CD4-positive, alpha-beta memory T cell (primary cell): ENCODE measurements at regions of chr9 and their contacts with region 1.

Region 1: GRCh38 chr9:71472400-71472799 is 295.9 kb downstream of the CEMIP2 start:
- DNase-seq: no peak
- H3K4me3 ChIP-seq: no peak overlapping the region
- H3K4me3 Mint-ChIP-seq: no peak overlapping the region
- H3K27ac ChIP-seq: no peak overlapping the region
- H3K27ac Mint-ChIP-seq: no peak overlapping the region
- H3K4me1 ChIP-seq: no peaks in the 10 kb centered on the region
- H3K4me1 Mint-ChIP-seq: no peaks in the 10 kb centered on the region
- H3K27me3 ChIP-seq: no peaks in the 10 kb centered on the region
- H3K27me3 Mint-ChIP-seq: peaks cover 3 to 16% of the 10 kb centered on the region in 2 donors

Region 2: DNA sequence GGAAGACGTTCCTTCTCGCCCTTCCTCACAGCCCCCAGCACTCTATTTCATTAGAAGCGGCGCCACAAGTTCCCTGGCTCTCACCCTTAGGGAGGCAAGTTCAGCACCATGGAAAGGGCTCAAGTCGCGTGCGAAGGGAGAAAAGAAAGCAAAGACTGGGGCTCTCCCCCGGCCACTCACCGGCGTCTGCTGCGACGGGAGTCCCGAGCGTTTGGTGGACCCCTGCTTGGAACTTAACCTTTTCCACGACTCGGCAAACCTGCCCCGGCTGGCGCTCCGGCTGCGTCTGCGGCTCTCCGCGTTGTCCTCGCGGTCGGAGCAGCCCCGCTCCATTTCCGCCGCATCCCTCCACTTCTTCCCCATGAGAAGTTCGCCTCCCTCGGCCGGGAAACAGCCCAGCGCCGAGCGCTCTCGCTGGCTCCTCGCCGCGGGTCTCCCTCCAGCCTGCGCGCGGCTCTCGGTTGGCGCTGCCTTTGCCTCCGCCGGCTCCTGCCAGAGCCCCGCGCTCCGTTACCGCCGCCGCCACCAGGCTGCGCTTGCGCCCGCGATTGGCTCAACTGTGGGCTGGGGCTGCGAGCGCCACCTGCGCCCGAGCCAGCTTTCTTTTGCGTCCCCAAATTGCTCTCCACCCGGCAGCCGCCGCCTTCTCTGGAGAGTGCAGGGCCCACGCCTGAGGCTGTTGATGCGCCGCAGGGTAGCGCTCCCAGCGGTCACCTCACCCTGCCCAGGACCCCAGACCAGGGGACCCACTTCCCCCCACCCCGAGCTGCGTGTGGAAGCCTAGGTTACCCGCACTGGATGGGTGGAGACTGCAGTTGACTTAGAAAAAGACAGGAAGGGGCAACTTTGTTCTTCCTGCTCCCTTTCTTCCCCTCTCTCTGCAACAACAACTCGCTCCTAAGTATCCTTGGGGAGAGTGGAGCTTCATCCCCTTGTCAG is 25.7 kb before region 1 on chr9:
- CTCF ChIA-PET with region 1: no interaction called
- POLR2A ChIA-PET with region 1: no interaction called
- intact Hi-C with region 1: loop called (anchors 2 kb)
- DNase-seq: peak in 2 of 5 donors; percentile 5 to 7
- H3K4me3 ChIP-seq: no peak overlapping the region
- H3K4me3 Mint-ChIP-seq: peak overlapping the region in 5 of 8 donors; percentile 35 to 60 (median 46)
- H3K27ac ChIP-seq: no peak overlapping the region
- H3K27ac Mint-ChIP-seq: no peak overlapping the region
- H3K4me1 ChIP-seq: no peaks in the 10 kb centered on the region
- H3K4me1 Mint-ChIP-seq: peaks cover 0 to 5% (median 1%) of the 10 kb centered on the region in 4 donors
- H3K27me3 ChIP-seq: peaks cover 8% of the 10 kb centered on the region
- H3K27me3 Mint-ChIP-seq: peaks cover 32 to 33% of the 10 kb centered on the region in 2 donors